CD4-positive, alpha-beta memory T cell (primary cell): ENCODE measurements at regions of chr10 and their contacts with region 1.

Region 1: DNA sequence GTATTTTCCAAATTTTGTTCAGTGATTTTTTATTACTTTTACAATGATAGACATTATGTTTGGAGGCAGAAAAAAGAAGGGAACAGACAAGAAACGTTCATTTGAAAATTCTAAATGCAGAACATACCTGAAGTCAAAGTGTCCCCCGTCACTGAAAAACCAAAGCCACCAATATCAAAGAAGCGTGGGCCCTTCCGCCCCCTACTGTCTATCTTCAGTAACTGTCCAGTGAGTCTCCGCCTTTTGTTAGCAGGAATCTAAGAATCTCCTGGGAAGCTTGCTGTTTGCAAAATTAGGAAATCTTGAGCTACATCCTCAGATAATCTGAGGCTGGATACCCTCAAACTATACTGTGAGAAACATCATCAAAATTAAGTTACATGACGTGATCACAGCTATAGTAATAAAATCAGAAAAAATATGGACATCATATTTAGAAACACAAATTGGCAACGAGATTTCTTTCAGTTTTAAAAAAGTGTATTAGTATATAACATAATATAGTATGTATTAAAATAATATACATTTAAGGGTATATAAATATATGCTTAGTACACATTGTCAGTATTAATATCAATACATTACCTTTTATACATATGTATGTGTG is 169.3 kb upstream of the AKR1E2 start:
- DNase-seq: peak in 4 of 5 donors; percentile 50 to 61 (median 58)
- H3K4me3 ChIP-seq: no peak overlapping the region
- H3K4me3 Mint-ChIP-seq: no peak overlapping the region
- H3K27ac ChIP-seq: no peak overlapping the region
- H3K27ac Mint-ChIP-seq: no peak overlapping the region
- H3K4me1 ChIP-seq: peaks cover 7% of the 10 kb centered on the region
- H3K4me1 Mint-ChIP-seq: peaks cover 9 to 10% (median 10%) of the 10 kb centered on the region in 4 donors
- H3K27me3 ChIP-seq: no peaks in the 10 kb centered on the region
- H3K27me3 Mint-ChIP-seq: peaks cover 1 to 4% of the 10 kb centered on the region in 2 donors

Region 2: GRCh38 chr10:3239066-3239919 is 1417.4 kb before region 1 on chr10:
- CTCF ChIA-PET with region 1: interaction called, 68 read pairs
- POLR2A ChIA-PET with region 1: no interaction called
- intact Hi-C with region 1: loop called (anchors 1 kb)
- DNase-seq: peak; percentile 62 to 73 (median 64)
- H3K4me3 ChIP-seq: no peak overlapping the region
- H3K4me3 Mint-ChIP-seq: peak overlapping the region in 2 of 8 donors; percentile 45 to 77
- H3K27ac ChIP-seq: no peak overlapping the region
- H3K27ac Mint-ChIP-seq: peak overlapping the region in 3 of 7 donors; percentile 61 to 84 (median 67)
- H3K4me1 ChIP-seq: no peaks in the 10 kb centered on the region
- H3K4me1 Mint-ChIP-seq: peaks cover 0 to 9% (median 5%) of the 10 kb centered on the region in 4 donors
- H3K27me3 ChIP-seq: no peaks in the 10 kb centered on the region
- H3K27me3 Mint-ChIP-seq: peaks cover 0 to 2% of the 10 kb centered on the region in 2 donors

Region 3: GRCh38 chr10:3623746-3624145 is 1032.9 kb before region 1 on chr10:
- CTCF ChIA-PET with region 1: no interaction called
- POLR2A ChIA-PET with region 1: no interaction called
- intact Hi-C with region 1: loop called (anchors 10 kb)
- DNase-seq: no peak
- H3K4me3 ChIP-seq: no peak overlapping the region
- H3K4me3 Mint-ChIP-seq: peak overlapping the region in 5 of 8 donors; percentile 37 to 71 (median 60)
- H3K27ac ChIP-seq: no peak overlapping the region
- H3K27ac Mint-ChIP-seq: peak overlapping the region in 3 of 7 donors; percentile 9 to 15 (median 12)
- H3K4me1 ChIP-seq: peaks cover 13% of the 10 kb centered on the region
- H3K4me1 Mint-ChIP-seq: peaks cover 16 to 18% (median 16%) of the 10 kb centered on the region in 4 donors
- H3K27me3 ChIP-seq: no peaks in the 10 kb centered on the region
- H3K27me3 Mint-ChIP-seq: no peaks in the 10 kb centered on the region

Region 4: DNA sequence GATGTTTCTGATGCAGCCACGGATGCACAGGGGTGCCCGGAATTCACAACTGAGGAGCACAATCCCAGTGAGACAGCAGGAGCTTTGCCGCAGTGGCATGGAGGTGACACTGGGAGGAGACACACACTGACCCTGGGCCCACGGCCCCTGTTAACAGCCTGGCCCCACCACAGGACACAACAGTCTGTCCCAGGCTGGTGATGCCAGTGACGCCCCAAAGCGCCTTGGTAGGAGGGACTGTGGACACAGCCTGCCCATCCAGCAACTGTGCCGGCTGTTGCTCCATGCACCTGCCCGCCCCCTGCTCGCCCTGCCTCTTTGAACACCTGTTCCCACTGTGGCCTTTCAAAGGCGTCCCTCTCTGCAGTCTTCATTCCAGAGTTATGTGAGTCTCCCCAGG is 921.5 kb before region 1 on chr10:
- CTCF ChIA-PET with region 1: interaction called, 5 read pairs
- POLR2A ChIA-PET with region 1: no interaction called
- intact Hi-C with region 1: loop called (anchors 1 kb)
- DNase-seq: no peak
- H3K4me3 ChIP-seq: no peak overlapping the region
- H3K4me3 Mint-ChIP-seq: no peak overlapping the region
- H3K27ac ChIP-seq: no peak overlapping the region
- H3K27ac Mint-ChIP-seq: peak overlapping the region in 1 of 7 donors; percentile 2
- H3K4me1 ChIP-seq: peaks cover 5% of the 10 kb centered on the region
- H3K4me1 Mint-ChIP-seq: peaks cover 7 to 8% (median 8%) of the 10 kb centered on the region in 4 donors
- H3K27me3 ChIP-seq: no peaks in the 10 kb centered on the region
- H3K27me3 Mint-ChIP-seq: no peaks in the 10 kb centered on the region

Region 5: GRCh38 chr10:4498711-4499251 is 157.9 kb before region 1 on chr10:
- CTCF ChIA-PET with region 1: no interaction called
- POLR2A ChIA-PET with region 1: no interaction called
- intact Hi-C with region 1: no loop called
- DNase-seq: no peak
- H3K4me3 ChIP-seq: no peak overlapping the region
- H3K4me3 Mint-ChIP-seq: no peak overlapping the region
- H3K27ac ChIP-seq: no peak overlapping the region
- H3K27ac Mint-ChIP-seq: no peak overlapping the region
- H3K4me1 ChIP-seq: no peaks in the 10 kb centered on the region
- H3K4me1 Mint-ChIP-seq: no peaks in the 10 kb centered on the region
- H3K27me3 ChIP-seq: no peaks in the 10 kb centered on the region
- H3K27me3 Mint-ChIP-seq: no peaks in the 10 kb centered on the region

Region 6: DNA sequence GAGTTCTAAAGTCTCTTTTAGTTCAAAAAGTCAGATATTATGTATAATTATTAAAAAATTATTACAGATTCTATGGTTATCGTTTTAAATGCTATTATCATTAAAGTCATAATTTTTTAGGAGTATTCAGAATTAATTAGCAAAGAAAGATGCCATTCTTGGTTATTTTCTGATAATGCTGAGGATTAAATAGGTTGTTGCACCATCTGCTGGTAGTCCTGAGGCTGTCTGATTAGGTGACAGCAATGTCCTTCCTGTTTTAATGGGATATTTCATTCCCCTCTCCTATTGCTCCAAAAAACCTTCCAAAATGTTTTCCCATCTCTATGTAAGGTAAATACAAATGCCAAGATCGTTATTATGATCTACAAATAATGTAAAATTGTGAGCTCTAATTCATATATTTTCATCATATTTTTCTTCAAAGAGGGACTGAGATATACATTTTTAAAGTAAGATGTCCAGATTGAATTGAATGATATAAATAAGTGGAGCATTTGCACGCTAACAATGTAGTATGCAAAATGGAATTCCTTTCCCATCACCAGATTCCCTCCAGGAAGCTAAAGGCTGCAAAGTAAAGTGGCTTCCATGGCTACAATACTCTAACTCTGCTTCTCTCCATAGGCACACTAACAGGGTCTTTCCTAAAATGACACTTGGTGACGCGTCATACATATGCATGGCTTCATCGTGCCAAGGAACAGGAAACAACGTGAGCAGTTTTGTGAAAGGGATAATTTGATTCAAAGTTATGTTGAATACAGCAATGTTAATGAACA is 110.5 kb after region 1 on chr10:
- CTCF ChIA-PET with region 1: interaction called, 6 read pairs
- POLR2A ChIA-PET with region 1: no interaction called
- intact Hi-C with region 1: loop called (anchors 1 kb)
- DNase-seq: peak in 4 of 5 donors; percentile 18 to 33 (median 32)
- H3K4me3 ChIP-seq: no peak overlapping the region
- H3K4me3 Mint-ChIP-seq: no peak overlapping the region
- H3K27ac ChIP-seq: no peak overlapping the region
- H3K27ac Mint-ChIP-seq: no peak overlapping the region
- H3K4me1 ChIP-seq: no peaks in the 10 kb centered on the region
- H3K4me1 Mint-ChIP-seq: no peaks in the 10 kb centered on the region
- H3K27me3 ChIP-seq: no peaks in the 10 kb centered on the region
- H3K27me3 Mint-ChIP-seq: peaks cover 8 to 12% of the 10 kb centered on the region in 2 donors